IMR-90 (cell line): ENCODE measurements at regions of chr12 and their contacts with region 1.

Region 1: GRCh38 chr12:9707864-9708808 is 24.8 kb downstream of the CLECL1 start:
- DNase-seq: peak; percentile 65
- ATAC-seq: peak; percentile 86
- H3K4me3 ChIP-seq: no peak overlapping the region
- H3K27ac ChIP-seq: no peak overlapping the region
- H3K4me1 ChIP-seq: no peaks in the 10 kb centered on the region
- H3K27me3 ChIP-seq: no peaks in the 10 kb centered on the region
- CTCF ChIP-seq: peak; percentile 79
- POLR2A ChIP-seq: no peak
- RAD21 ChIP-seq: peak; percentile 80

Region 2: GRCh38 chr12:9634177-9634803 is 73.8 kb before region 1 on chr12:
- CTCF ChIA-PET with region 1: interaction called, 9 read pairs
- POLR2A ChIA-PET with region 1: no interaction called
- dilution Hi-C with region 1: loop called (anchors 10 kb)
- in situ Hi-C with region 1: loop called (anchors 5 kb)
- intact Hi-C with region 1: loop called (anchors 1 kb)
- DNase-seq: peak; percentile 47
- ATAC-seq: peak; percentile 62
- H3K4me3 ChIP-seq: no peak overlapping the region
- H3K27ac ChIP-seq: no peak overlapping the region
- H3K4me1 ChIP-seq: no peaks in the 10 kb centered on the region
- H3K27me3 ChIP-seq: no peaks in the 10 kb centered on the region; the same call in 1 of the 2 replicates
- CTCF ChIP-seq: peak; percentile 87
- POLR2A ChIP-seq: no peak
- RAD21 ChIP-seq: peak; percentile 85